Posterior cingulate gyrus (tissue), 11 donors: ENCODE measurements at regions of chr19 and their contacts with region 1.

Region 1: GRCh38 chr19:46076951-46077816 is 36.4 kb upstream of the IGFL4 start:
- DNase-seq: peak; percentile 62 to 98 (median 80)

Region 2: GRCh38 chr19:45834970-45835369 is 242.2 kb before region 1 on chr19:
- intact Hi-C with region 1: no loop called
- DNase-seq: peak in 2 of 10 donors; percentile 70 to 74

Region 3: DNA sequence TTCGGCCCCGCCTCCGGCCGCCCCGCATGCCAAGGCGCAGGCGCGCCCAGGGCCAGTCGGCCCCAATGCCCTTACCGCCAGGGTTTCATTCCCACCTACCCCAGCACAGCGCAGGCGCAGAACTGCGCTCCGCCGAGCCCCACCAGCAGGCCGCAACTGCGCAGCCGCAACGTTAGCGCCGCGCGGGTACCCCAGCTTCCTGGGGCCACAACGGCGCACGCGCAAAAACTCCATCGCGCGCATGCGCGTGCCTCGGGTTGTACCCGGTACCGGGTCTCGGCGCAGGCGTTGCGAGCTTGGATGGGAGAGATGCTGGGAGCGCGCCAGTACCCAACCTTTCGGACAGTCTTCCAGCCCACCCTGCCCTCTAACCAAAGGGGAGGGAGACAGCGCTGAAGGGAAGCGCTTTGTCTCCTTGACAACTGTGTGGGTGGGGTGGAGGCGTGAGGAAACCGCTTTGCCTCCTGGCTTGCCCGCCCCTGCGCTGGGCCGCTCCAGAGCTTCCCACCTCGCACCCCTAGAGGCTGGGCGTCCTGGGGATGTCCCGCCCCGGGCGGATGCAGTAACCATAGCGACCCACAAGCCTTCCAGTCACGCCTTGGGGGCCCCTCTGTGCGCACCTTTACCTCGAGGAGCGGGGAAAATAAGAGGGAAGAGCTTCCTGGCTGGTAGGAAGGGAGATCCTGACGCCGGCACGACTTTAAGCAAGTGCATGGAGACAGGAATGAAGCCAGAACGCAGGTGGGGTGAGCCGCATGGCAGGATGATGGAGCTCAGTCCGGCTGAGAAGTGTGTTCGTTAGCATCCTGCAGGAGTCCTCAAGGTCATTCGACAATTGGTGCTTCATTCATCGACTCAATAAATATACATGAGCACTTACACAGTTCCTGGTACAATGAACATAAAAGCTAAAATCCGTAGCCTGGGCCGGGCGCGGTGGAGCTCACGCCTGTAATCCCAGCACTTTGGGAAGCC is 174.2 kb before region 1 on chr19:
- intact Hi-C with region 1: loop called (anchors 10 kb)
- DNase-seq: peak; percentile 95 to 100 (median 98)

Region 4: GRCh38 chr19:46030812-46031550 is 46.2 kb before region 1 on chr19:
- intact Hi-C with region 1: loop called (anchors 1 kb)
- DNase-seq: peak in 1 of 10 donors; percentile 43

Region 5: GRCh38 chr19:46192992-46193650 is 115.9 kb after region 1 on chr19:
- intact Hi-C with region 1: loop called (anchors 2 kb)
- DNase-seq: no peak

Region 6: DNA sequence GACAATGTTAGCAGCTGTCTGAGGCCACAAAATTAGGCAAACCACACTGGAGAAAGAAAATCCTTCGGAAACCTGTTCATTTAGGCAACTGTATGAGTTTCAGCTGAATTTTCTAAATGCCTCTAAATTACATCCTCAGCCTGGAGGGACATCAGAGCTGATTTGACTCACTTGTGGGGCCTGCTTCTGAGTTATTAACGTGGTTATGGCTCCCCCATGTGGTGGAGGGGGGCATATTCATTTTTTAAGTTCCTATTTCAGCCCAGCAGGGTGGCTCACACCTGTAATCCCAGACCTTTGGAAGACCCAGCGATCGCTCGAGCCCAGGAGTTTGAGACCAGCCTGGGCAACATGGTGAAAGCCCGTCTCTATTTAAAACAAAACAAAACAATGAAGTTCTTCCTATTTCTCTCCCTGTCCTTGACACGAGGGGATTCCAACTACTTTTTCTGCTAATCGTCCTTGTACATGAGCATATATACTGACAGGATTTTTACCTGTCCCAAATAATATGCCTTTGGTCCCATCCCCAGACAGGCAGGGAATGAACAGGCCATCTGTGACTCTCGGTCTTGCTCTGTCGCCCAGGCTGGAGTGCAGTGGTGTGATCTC is 188.1 kb after region 1 on chr19:
- intact Hi-C with region 1: loop called (anchors 1 kb)
- DNase-seq: peak in 6 of 10 donors; percentile 31 to 89 (median 69)